B cell (primary cell): ENCODE measurements at regions of chr11 and their contacts with region 1.

Region 1: GRCh38 chr11:94493281-94494125 is at the starts of genes ANKRD49 and MRE11:
- DNase-seq: peak; percentile 98
- ATAC-seq: peak; percentile 100
- H3K4me3 ChIP-seq: peak within 1 kb of the TSS; percentile 73 to 99 (median 95)
- H3K4me3 Mint-ChIP-seq: peak within 1 kb of the TSS; percentile 95
- H3K27ac ChIP-seq: peak within 1 kb of the TSS; percentile 85 to 92
- H3K27ac Mint-ChIP-seq: peak within 1 kb of the TSS; percentile 94
- H3K4me1 ChIP-seq: peaks cover 13 to 26% of the 10 kb centered on the region in 2 donors
- H3K4me1 Mint-ChIP-seq: peaks cover 32% of the 10 kb centered on the region
- H3K27me3 ChIP-seq: no peaks in the 10 kb centered on the region
- H3K27me3 Mint-ChIP-seq: no peaks in the 10 kb centered on the region
- CTCF ChIP-seq: no peak
- total RNA-seq, gene ANKRD49: 51.4 and 52.0 TPM in 2 replicates
- total RNA-seq, gene MRE11: 53.5 and 54.0 TPM in 2 replicates

Region 2: DNA sequence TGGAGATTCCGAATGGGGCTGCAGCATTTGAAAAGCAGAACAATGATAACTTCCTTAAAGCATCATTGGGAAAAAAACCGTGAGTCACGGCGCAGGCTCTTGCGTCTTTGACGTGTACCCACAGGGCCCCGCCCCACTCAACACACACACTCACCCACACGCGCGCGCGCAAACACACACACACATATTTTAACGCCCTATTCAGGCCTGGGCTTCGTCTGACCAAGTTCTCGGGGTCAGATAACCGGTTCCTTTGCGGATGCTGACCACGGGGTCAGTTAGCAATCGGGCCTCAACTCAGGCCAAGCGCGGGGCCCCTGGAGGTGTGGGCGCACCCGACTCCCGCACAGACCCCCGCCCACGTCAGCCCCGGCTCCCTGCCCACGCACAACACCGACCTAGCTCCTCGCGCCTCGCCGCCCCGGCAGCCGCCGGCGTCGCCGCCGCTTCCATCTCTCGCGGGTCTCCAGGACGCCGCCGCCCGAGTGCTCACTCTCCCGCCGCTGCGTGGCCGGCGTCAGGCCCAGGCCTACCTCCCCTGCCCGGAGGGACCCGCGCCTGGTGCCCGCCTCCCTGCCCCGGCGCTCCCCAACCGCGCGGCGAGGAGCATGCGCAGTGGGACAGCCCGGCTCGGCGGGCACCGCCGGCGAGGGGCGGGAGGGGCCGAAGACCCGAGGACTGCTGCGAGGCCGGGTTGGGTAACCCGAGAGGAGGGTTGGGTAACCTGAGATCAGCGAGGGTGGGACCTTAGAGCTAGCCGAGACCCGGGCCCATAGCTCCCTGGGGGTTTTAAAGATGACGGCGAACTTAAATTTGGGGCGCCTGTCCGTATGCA is 1295.9 kb before region 1 on chr11 and contains the start of gene SLC36A4:
- CTCF ChIA-PET with region 1: no interaction called
- POLR2A ChIA-PET with region 1: no interaction called
- intact Hi-C with region 1: loop called (anchors 5 kb)
- DNase-seq: peak; percentile 94
- ATAC-seq: peak; percentile 85
- H3K4me3 ChIP-seq: peak within 1 kb of the TSS; percentile 67 to 99 (median 77)
- H3K4me3 Mint-ChIP-seq: peak within 1 kb of the TSS; percentile 96
- H3K27ac ChIP-seq: peak within 1 kb of the TSS; percentile 90 to 97
- H3K27ac Mint-ChIP-seq: peak within 1 kb of the TSS; percentile 96
- H3K4me1 ChIP-seq: peaks cover 7% of the 10 kb centered on the region in 2 donors
- H3K4me1 Mint-ChIP-seq: peaks cover 18% of the 10 kb centered on the region
- H3K27me3 ChIP-seq: peaks cover 0 to 7% (median 0%) of the 10 kb centered on the region in 4 experiments
- H3K27me3 Mint-ChIP-seq: peaks cover 10% of the 10 kb centered on the region
- CTCF ChIP-seq: no peak
- total RNA-seq, gene SLC36A4: 27.5 and 28.2 TPM in 2 replicates

Region 3: GRCh38 chr11:93741094-93741881 is 752.2 kb before region 1 on chr11 and contains the starts of genes C11orf54 and TAF1D:
- CTCF ChIA-PET with region 1: no interaction called
- POLR2A ChIA-PET with region 1: no interaction called
- intact Hi-C with region 1: loop called (anchors 1 kb)
- DNase-seq: peak; percentile 99
- ATAC-seq: peak; percentile 95
- H3K4me3 ChIP-seq: peak within 1 kb of the TSS; percentile 73 to 98 (median 92)
- H3K4me3 Mint-ChIP-seq: peak within 1 kb of the TSS; percentile 98
- H3K27ac ChIP-seq: peak within 1 kb of the TSS; percentile 90 to 96
- H3K27ac Mint-ChIP-seq: peak within 1 kb of the TSS; percentile 98
- H3K4me1 ChIP-seq: peaks cover 36 to 39% of the 10 kb centered on the region in 2 donors
- H3K4me1 Mint-ChIP-seq: peaks cover 63% of the 10 kb centered on the region
- H3K27me3 ChIP-seq: no peaks in the 10 kb centered on the region
- H3K27me3 Mint-ChIP-seq: no peaks in the 10 kb centered on the region
- CTCF ChIP-seq: no peak
- total RNA-seq, gene C11orf54: 38.9 and 40.3 TPM in 2 replicates
- total RNA-seq, gene TAF1D: 230 and 235 TPM in 2 replicates

Region 4: DNA sequence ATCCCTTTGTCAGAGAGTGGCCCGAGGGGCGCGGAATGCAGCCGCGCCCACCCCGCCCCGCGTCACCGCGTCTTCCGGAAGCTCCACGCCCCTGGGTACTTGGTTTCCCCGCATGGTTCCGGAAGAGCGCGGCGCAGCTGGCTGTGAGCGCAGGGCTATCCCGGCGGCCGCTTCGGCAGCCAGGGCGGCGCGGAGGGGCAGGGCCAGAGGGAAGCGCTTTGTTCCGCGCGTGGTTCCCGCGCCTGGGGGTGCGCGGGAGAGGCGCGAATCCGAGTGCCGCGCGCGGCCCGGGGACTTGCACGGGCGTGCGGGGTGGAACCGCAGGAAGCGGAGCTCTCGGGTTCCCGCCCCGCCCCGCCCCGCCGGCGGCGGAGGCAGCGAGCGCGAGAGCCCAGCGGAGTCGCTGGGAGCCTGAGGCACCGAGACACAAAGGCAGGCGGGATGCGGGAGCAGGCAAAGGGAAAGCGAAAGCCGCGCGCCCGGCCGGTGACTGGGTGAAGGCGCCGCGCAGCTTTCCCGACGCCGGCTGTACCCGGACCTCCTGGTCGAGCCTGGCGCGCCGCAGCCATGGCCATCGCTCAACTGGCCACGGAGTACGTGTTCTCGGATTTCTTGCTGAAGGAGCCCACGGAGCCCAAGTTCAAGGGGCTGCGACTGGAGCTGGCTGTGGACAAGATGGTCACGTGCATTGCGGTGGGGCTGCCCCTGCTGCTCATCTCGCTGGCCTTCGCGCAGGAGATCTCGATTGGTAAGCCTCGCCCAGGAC is 364.6 kb before region 1 on chr11 and contains the start of gene PANX1:
- CTCF ChIA-PET with region 1: no interaction called
- POLR2A ChIA-PET with region 1: no interaction called
- intact Hi-C with region 1: loop called (anchors 2 kb)
- DNase-seq: peak; percentile 89
- ATAC-seq: peak; percentile 81
- H3K4me3 ChIP-seq: peak within 1 kb of the TSS; percentile 73 to 92 (median 89)
- H3K4me3 Mint-ChIP-seq: no peak within 1 kb of the TSS
- H3K27ac ChIP-seq: peak within 1 kb of the TSS; percentile 81 to 90
- H3K27ac Mint-ChIP-seq: peak within 1 kb of the TSS; percentile 91
- H3K4me1 ChIP-seq: peaks cover 25 to 46% of the 10 kb centered on the region in 2 donors
- H3K4me1 Mint-ChIP-seq: peaks cover 29% of the 10 kb centered on the region
- H3K27me3 ChIP-seq: no peaks in the 10 kb centered on the region
- H3K27me3 Mint-ChIP-seq: no peaks in the 10 kb centered on the region
- CTCF ChIP-seq: no peak
- total RNA-seq, gene PANX1: 10.3 and 10.7 TPM in 2 replicates

Region 5: DNA sequence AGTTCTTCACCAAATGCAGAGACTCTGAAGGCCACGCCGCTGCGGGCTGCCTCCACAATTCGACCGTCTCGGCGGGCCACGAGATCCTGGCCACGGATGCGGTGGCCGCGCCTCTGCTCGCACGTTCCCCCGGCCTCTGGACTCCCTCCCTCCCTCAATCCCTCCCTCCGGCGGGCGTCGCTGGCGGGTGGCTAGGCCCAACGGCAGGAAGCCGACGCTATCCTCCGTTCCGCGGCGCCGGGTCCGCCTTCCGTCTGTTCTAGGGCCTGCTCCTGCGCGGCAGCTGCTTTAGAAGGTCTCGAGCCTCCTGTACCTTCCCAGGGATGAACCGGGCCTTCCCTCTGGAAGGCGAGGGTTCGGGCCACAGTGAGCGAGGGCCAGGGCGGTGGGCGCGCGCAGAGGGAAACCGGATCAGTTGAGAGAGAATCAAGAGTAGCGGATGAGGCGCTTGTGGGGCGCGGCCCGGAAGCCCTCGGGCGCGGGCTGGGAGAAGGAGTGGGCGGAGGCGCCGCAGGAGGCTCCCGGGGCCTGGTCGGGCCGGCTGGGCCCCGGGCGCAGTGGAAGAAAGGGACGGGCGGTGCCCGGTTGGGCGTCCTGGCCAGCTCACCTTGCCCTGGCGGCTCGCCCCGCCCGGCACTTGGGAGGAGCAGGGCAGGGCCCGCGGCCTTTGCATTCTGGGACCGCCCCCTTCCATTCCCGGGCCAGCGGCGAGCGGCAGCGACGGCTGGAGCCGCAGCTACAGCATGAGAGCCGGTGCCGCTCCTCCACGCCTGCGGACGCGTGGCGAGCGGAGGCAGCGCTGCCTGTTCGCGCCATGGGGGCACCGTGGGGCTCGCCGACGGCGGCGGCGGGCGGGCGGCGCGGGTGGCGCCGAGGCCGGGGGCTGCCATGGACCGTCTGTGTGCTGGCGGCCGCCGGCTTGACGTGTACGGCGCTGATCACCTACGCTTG is 50.5 kb after region 1 on chr11 and contains the start of gene FUT4:
- CTCF ChIA-PET with region 1: no interaction called
- POLR2A ChIA-PET with region 1: no interaction called
- intact Hi-C with region 1: loop called (anchors 1 kb)
- DNase-seq: peak; percentile 79
- ATAC-seq: peak; percentile 82
- H3K4me3 ChIP-seq: peak within 1 kb of the TSS; percentile 34 to 79 (median 70)
- H3K4me3 Mint-ChIP-seq: peak within 1 kb of the TSS; percentile 100
- H3K27ac ChIP-seq: peak within 1 kb of the TSS; percentile 66 to 84
- H3K27ac Mint-ChIP-seq: peak within 1 kb of the TSS; percentile 98
- H3K4me1 ChIP-seq: peaks cover 6 to 18% of the 10 kb centered on the region in 2 donors
- H3K4me1 Mint-ChIP-seq: peaks cover 23% of the 10 kb centered on the region
- H3K27me3 ChIP-seq: no peaks in the 10 kb centered on the region
- H3K27me3 Mint-ChIP-seq: peaks cover 4% of the 10 kb centered on the region
- CTCF ChIP-seq: no peak
- total RNA-seq, gene FUT4: 3.7 and 4.4 TPM in 2 replicates

Region 6: DNA sequence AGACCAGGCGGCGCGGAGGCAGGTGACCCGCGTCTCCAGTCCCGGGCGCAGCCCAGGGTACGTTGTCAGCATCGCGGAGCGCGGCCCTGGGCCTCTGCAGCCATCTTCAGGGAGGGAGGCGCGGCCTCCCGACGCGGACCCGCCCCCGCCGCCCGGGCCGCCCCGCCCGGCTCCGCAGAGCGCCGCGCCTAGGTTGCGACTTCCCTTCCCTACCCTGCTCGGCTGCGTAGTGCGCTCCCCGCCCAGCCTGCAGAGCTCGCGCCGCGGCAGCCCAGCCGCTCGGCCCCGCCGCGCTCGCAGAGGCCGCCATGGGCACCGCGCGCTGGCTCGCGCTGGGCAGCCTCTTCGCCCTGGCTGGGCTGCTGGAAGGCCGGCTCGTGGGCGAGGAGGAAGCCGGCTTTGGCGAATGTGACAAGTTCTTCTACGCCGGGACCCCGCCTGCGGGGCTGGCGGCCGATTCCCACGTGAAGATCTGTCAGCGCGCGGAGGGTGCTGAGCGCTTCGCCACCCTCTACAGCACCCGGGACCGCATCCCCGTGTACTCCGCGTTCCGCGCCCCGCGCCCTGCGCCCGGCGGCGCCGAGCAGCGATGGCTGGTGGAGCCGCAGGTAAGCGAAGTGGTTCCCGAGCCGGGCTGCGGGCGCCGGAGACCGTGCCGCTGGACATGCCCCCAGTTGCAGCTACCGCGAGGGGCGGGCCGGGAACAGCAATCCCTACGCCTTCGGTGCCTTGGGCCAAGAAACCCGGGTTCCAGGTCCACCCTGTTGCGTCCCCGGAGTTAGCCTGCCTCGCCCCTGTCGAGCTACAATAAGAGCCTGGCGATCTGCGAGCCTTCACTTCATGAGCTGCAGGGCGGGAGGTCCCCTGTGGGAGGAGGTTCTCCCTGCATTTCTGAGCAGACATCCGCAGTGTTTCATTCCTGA is 596.4 kb after region 1 on chr11 and contains the start of gene ENDOD1:
- CTCF ChIA-PET with region 1: no interaction called
- POLR2A ChIA-PET with region 1: no interaction called
- intact Hi-C with region 1: loop called (anchors 2 kb)
- DNase-seq: peak; percentile 93
- ATAC-seq: peak; percentile 94
- H3K4me3 ChIP-seq: peak within 1 kb of the TSS; percentile 13 to 82 (median 79)
- H3K4me3 Mint-ChIP-seq: peak within 1 kb of the TSS; percentile 94
- H3K27ac ChIP-seq: peak within 1 kb of the TSS; percentile 79 to 94
- H3K27ac Mint-ChIP-seq: peak within 1 kb of the TSS; percentile 98
- H3K4me1 ChIP-seq: peaks cover 50 to 52% of the 10 kb centered on the region in 2 donors
- H3K4me1 Mint-ChIP-seq: peaks cover 59% of the 10 kb centered on the region
- H3K27me3 ChIP-seq: no peaks in the 10 kb centered on the region
- H3K27me3 Mint-ChIP-seq: no peaks in the 10 kb centered on the region
- CTCF ChIP-seq: no peak
- total RNA-seq, gene ENDOD1: 11.7 and 12.0 TPM in 2 replicates

Region 7: DNA sequence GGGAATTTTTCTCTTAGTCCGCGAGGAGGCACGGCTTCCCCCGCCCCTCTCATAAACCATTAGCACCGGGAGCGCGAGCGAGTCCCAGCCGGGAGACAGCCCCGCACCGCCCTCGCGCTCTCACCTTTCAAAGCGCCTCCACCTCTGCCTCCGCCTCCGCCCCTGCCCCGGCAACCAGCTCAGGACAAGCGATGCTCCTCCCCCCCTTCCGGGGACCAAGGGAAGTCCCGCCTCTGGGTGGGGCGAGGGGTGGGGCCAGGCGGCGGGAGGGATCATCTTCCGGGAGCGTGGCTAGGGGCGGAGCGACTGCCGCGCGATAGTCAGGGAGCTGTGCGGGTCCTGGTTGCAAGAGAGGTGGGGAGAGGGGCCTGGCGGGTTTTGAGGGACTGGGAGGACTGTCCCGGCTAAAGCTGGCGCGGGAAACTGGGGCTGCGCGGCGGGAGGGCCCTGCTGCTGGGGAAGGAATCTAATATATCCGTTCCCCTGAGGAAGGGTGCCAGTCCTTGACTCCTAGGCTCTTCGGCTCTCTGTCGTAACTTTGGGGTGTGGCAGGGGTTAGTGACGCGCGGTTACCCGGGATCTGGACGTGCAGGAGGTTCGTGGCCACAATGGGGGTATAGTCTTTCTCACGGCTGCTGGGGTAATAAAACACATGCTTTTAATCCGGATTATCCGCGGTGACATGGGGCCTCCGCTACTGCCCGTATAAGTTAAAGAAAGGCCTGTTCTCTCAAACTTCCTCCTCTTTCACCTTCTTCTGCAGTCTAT is 1896.4 kb after region 1 on chr11 and contains the starts of genes CCDC82 and JRKL:
- CTCF ChIA-PET with region 1: no interaction called
- POLR2A ChIA-PET with region 1: no interaction called
- intact Hi-C with region 1: loop called (anchors 2 kb)
- DNase-seq: peak; percentile 96
- ATAC-seq: peak; percentile 99
- H3K4me3 ChIP-seq: peak within 1 kb of the TSS; percentile 77 to 89 (median 84)
- H3K4me3 Mint-ChIP-seq: peak within 1 kb of the TSS; percentile 93
- H3K27ac ChIP-seq: peak within 1 kb of the TSS; percentile 82 to 83
- H3K27ac Mint-ChIP-seq: peak within 1 kb of the TSS; percentile 95
- H3K4me1 ChIP-seq: peaks cover 13 to 18% of the 10 kb centered on the region in 2 donors
- H3K4me1 Mint-ChIP-seq: peaks cover 26% of the 10 kb centered on the region
- H3K27me3 ChIP-seq: no peaks in the 10 kb centered on the region
- H3K27me3 Mint-ChIP-seq: no peaks in the 10 kb centered on the region
- CTCF ChIP-seq: no peak
- total RNA-seq, gene CCDC82: 34.1 and 37.9 TPM in 2 replicates
- total RNA-seq, gene JRKL: 12.5 and 12.9 TPM in 2 replicates